Activated CD4-positive, alpha-beta memory T cell treated with anti-CD3 and anti-CD28 coated beads for 36 hours (primary cell): ENCODE measurements at regions of chr1 and their contacts with region 1.

Region 1: GRCh38 chr1:206507284-206508129 is at the start of gene RASSF5:
- DNase-seq: peak; percentile 90
- H3K4me3 Mint-ChIP-seq: peak within 1 kb of the TSS; percentile 71
- H3K27ac Mint-ChIP-seq: peak within 1 kb of the TSS; percentile 30
- H3K4me1 Mint-ChIP-seq: peaks cover 47% of the 10 kb centered on the region
- H3K27me3 Mint-ChIP-seq: peaks cover 26% of the 10 kb centered on the region
- total RNA-seq, gene RASSF5: 203 TPM

Region 2: GRCh38 chr1:206469933-206470691 is 37.4 kb before region 1 on chr1 and contains the start of gene IKBKE:
- CTCF ChIA-PET with region 1: interaction called, 4 read pairs
- POLR2A ChIA-PET with region 1: interaction called, 4 read pairs
- intact Hi-C with region 1: loop called (anchors 2 kb)
- DNase-seq: peak; percentile 74
- H3K4me3 Mint-ChIP-seq: peak within 1 kb of the TSS; percentile 85
- H3K27ac Mint-ChIP-seq: peak within 1 kb of the TSS; percentile 90
- H3K4me1 Mint-ChIP-seq: peaks cover 87% of the 10 kb centered on the region
- H3K27me3 Mint-ChIP-seq: no peaks in the 10 kb centered on the region
- total RNA-seq, gene IKBKE: 18.4 to 19.4 TPM

Region 3: GRCh38 chr1:206479183-206480125 is 28.1 kb before region 1 on chr1:
- CTCF ChIA-PET with region 1: interaction called, 17 read pairs
- POLR2A ChIA-PET with region 1: no interaction called
- intact Hi-C with region 1: no loop called
- DNase-seq: peak; percentile 79
- H3K4me3 Mint-ChIP-seq: no peak overlapping the region
- H3K27ac Mint-ChIP-seq: peak overlapping the region; percentile 26
- H3K4me1 Mint-ChIP-seq: peaks cover 37% of the 10 kb centered on the region
- H3K27me3 Mint-ChIP-seq: no peaks in the 10 kb centered on the region

Region 4: GRCh38 chr1:206496131-206496793 is 11.2 kb before region 1 on chr1:
- CTCF ChIA-PET with region 1: interaction called, 10 read pairs
- POLR2A ChIA-PET with region 1: interaction called, 4 read pairs
- intact Hi-C with region 1: no loop called
- DNase-seq: no peak
- H3K4me3 Mint-ChIP-seq: no peak overlapping the region
- H3K27ac Mint-ChIP-seq: peak overlapping the region; percentile 67
- H3K4me1 Mint-ChIP-seq: peaks cover 8% of the 10 kb centered on the region
- H3K27me3 Mint-ChIP-seq: no peaks in the 10 kb centered on the region

Region 5: GRCh38 chr1:206551986-206552326 is 44.4 kb after region 1 on chr1:
- CTCF ChIA-PET with region 1: interaction called, 3 read pairs
- POLR2A ChIA-PET with region 1: no interaction called
- intact Hi-C with region 1: loop called (anchors 1 kb)
- DNase-seq: peak; percentile 92
- H3K4me3 Mint-ChIP-seq: peak overlapping the region; percentile 70
- H3K27ac Mint-ChIP-seq: peak overlapping the region; percentile 91
- H3K4me1 Mint-ChIP-seq: peaks cover 53% of the 10 kb centered on the region
- H3K27me3 Mint-ChIP-seq: no peaks in the 10 kb centered on the region

Region 6: DNA sequence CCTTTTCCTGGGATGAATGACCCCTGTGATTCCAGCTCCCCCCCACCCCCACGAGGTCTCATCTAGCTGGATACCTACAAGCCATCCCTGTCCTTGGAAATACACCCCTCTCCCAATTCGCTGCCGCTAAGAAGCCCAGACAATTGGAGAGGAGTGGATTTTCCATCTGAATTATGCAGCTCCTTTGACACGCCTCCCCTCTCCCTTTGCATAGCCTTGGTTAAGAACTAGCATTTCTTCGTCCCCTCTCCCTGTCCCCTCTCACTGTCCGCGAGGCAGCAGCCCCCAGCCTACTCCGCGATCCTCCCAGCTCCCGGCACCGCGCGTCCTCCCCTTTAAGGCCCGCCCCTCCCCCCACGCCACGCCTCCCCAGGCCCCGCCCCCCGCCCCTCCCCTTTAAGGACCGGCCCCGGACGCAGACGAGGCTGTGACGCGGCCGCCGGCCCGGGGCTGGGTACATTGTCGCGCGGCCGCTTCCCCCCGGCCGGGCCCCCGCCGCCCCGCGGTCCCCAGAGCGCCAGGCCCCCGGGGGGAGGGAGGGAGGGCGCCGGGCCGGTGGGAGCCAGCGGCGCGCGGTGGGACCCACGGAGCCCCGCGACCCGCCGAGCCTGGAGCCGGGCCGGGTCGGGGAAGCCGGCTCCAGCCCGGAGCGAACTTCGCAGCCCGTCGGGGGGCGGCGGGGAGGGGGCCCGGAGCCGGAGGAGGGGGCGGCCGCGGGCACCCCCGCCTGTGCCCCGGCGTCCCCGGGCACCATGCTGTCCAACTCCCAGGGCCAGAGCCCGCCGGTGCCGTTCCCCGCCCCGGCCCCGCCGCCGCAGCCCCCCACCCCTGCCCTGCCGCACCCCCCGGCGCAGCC is 177.2 kb after region 1 on chr1 and contains the start of gene MAPKAPK2:
- CTCF ChIA-PET with region 1: no interaction called
- POLR2A ChIA-PET with region 1: no interaction called
- intact Hi-C with region 1: loop called (anchors 5 kb)
- DNase-seq: peak; percentile 83
- H3K4me3 Mint-ChIP-seq: peak within 1 kb of the TSS; percentile 90
- H3K27ac Mint-ChIP-seq: peak within 1 kb of the TSS; percentile 95
- H3K4me1 Mint-ChIP-seq: peaks cover 58% of the 10 kb centered on the region
- H3K27me3 Mint-ChIP-seq: peaks cover 1% of the 10 kb centered on the region
- total RNA-seq, gene MAPKAPK2: 96.9 to 97.4 TPM

Region 7: GRCh38 chr1:206890690-206891089 is 383.2 kb after region 1 on chr1:
- CTCF ChIA-PET with region 1: no interaction called
- POLR2A ChIA-PET with region 1: no interaction called
- intact Hi-C with region 1: loop called (anchors 10 kb)
- DNase-seq: no peak
- H3K4me3 Mint-ChIP-seq: no peak overlapping the region
- H3K27ac Mint-ChIP-seq: peak overlapping the region; percentile 69
- H3K4me1 Mint-ChIP-seq: peaks cover 53% of the 10 kb centered on the region
- H3K27me3 Mint-ChIP-seq: peaks cover 3% of the 10 kb centered on the region